ENCODE measurements at regions of chr10 and their contacts with region 1.

Region 1: DNA sequence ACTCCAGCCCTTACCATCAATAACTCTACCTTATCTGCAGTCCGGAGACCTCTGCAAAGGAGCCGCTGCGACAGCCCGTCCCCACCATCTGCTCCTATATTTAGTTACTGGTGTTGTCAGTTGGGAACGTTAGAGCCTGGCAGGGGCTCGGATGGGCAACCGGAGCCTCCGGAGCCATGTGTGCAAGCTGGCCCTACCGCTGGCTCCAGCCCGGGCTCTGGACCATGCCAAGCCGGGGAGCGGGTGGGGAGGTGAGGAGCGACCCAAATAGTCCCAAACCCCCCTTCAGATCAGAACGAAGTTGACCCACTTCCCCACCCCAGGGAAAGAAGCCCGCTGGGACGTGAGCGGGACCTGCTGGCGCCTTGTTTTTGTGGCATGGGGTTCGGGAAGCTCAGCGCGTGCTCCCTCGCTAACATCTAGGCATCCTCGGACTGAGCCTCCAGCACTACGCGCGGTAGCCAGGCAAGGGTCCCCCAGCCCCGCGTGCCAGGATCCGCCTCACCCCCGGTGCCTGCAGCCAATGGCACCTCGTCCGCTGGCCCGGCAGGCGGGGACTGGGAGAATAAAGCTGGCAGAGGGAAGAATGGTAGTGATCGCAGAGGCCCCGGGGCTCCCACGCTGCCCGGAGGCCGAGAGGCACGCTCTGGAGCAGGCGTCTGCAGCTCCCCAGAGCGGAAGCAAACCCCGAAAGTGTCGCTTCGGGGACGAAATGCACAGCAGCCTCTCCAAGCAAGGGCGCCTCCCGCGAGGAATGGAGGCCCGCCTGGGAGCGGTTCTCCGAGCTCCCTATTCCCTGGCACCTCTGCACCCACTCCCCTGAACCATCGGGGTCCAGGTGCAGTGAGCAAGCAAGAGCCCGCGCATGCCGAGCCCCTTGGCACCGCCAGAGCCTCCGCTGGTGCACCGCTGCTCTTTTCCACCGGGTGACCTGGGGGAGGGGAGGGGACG is 679 bp downstream of the LRRC20 start:
- DNase-seq: peak; percentile 66
- H3K4me3 Mint-ChIP-seq: peak overlapping the region; percentile 85
- H3K27ac Mint-ChIP-seq: peak overlapping the region; percentile 19
- H3K4me1 Mint-ChIP-seq: peaks cover 20% of the 10 kb centered on the region
- H3K27me3 Mint-ChIP-seq: peaks cover 8% of the 10 kb centered on the region
- CTCF ChIP-seq: no peak

Region 2: GRCh38 chr10:70093335-70093944 is 288.3 kb before region 1 on chr10:
- CTCF ChIA-PET with region 1: no interaction called
- intact Hi-C with region 1: no loop called
- DNase-seq: no peak
- H3K4me3 Mint-ChIP-seq: no peak overlapping the region
- H3K27ac Mint-ChIP-seq: no peak overlapping the region
- H3K4me1 Mint-ChIP-seq: peaks cover 38% of the 10 kb centered on the region
- H3K27me3 Mint-ChIP-seq: no peaks in the 10 kb centered on the region
- CTCF ChIP-seq: no peak

Region 3: GRCh38 chr10:70115948-70116682 is 265.6 kb before region 1 on chr10:
- CTCF ChIA-PET with region 1: interaction called, 10 read pairs
- intact Hi-C with region 1: no loop called
- DNase-seq: peak; percentile 73
- H3K4me3 Mint-ChIP-seq: no peak overlapping the region
- H3K27ac Mint-ChIP-seq: no peak overlapping the region
- H3K4me1 Mint-ChIP-seq: no peaks in the 10 kb centered on the region
- H3K27me3 Mint-ChIP-seq: no peaks in the 10 kb centered on the region
- CTCF ChIP-seq: peak; percentile 96

Region 4: DNA sequence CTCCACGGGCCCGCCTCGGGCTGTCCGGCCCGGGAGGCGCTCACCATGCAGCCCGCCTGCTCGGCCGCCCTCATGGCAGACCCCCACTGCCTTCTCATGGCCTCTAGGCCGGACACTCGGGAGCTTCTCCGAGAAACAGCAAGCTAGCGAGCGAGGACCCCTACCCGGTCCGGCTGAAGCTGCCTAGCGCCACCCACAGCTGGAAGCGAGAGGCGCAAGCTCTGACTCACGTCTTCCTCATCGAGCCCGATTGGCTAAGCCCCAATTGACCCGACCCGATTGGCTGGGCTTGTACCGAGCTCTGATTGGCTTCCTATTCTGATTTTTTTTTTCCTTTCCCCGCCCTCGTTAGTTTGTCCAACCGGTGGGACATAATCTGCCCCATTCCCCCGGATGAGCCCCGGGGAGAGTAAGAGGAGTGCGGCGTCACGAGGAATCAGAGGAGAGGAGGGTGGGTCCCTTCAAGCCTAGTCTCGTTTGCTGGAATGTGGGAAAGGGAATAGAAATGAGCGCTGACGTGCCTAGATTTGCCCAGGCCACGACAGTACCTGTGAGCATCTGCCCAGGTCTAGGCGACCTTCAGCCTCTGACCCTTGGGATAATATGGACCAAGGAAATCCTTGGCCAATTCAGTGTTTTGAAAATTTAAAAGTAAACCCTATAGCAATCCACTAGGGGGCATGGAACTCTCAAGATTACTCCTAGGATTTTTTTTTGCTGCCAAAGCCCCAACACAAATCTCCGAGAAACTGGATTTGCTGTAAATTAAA is 235.1 kb before region 1 on chr10 and contains the start of gene TYSND1:
- CTCF ChIA-PET with region 1: interaction called, 20 read pairs
- intact Hi-C with region 1: no loop called
- DNase-seq: peak; percentile 98
- H3K4me3 Mint-ChIP-seq: peak within 1 kb of the TSS; percentile 86
- H3K27ac Mint-ChIP-seq: peak within 1 kb of the TSS; percentile 91
- H3K4me1 Mint-ChIP-seq: peaks cover 8% of the 10 kb centered on the region
- H3K27me3 Mint-ChIP-seq: no peaks in the 10 kb centered on the region
- CTCF ChIP-seq: peak; percentile 12
- total RNA-seq, gene TYSND1: 21.4 and 24.6 TPM in 2 replicates

Region 5: GRCh38 chr10:70267161-70267933 is 114.4 kb before region 1 on chr10:
- CTCF ChIA-PET with region 1: interaction called, 13 read pairs
- intact Hi-C with region 1: no loop called
- DNase-seq: peak; percentile 56
- H3K4me3 Mint-ChIP-seq: no peak overlapping the region
- H3K27ac Mint-ChIP-seq: peak overlapping the region; percentile 3
- H3K4me1 Mint-ChIP-seq: peaks cover 32% of the 10 kb centered on the region
- H3K27me3 Mint-ChIP-seq: no peaks in the 10 kb centered on the region
- CTCF ChIP-seq: peak; percentile 43

Region 6: GRCh38 chr10:70399177-70399576 is 17.4 kb after region 1 on chr10:
- CTCF ChIA-PET with region 1: interaction called, 32 read pairs
- intact Hi-C with region 1: no loop called
- DNase-seq: no peak
- H3K4me3 Mint-ChIP-seq: no peak overlapping the region
- H3K27ac Mint-ChIP-seq: no peak overlapping the region
- H3K4me1 Mint-ChIP-seq: peaks cover 8% of the 10 kb centered on the region
- H3K27me3 Mint-ChIP-seq: no peaks in the 10 kb centered on the region
- CTCF ChIP-seq: no peak

Region 7: GRCh38 chr10:70404036-70404786 is 22.5 kb after region 1 on chr10 and contains the start of gene EIF4EBP2:
- CTCF ChIA-PET with region 1: interaction called, 32 read pairs
- intact Hi-C with region 1: no loop called
- DNase-seq: peak; percentile 100
- H3K4me3 Mint-ChIP-seq: peak within 1 kb of the TSS; percentile 85
- H3K27ac Mint-ChIP-seq: peak within 1 kb of the TSS; percentile 72
- H3K4me1 Mint-ChIP-seq: peaks cover 37% of the 10 kb centered on the region
- H3K27me3 Mint-ChIP-seq: no peaks in the 10 kb centered on the region
- CTCF ChIP-seq: no peak
- total RNA-seq, gene EIF4EBP2: 53.1 and 54.7 TPM in 2 replicates